Ascending aorta (tissue), 2 donors: ENCODE measurements at regions of chr7 and their contacts with region 1.

Region 1: DNA sequence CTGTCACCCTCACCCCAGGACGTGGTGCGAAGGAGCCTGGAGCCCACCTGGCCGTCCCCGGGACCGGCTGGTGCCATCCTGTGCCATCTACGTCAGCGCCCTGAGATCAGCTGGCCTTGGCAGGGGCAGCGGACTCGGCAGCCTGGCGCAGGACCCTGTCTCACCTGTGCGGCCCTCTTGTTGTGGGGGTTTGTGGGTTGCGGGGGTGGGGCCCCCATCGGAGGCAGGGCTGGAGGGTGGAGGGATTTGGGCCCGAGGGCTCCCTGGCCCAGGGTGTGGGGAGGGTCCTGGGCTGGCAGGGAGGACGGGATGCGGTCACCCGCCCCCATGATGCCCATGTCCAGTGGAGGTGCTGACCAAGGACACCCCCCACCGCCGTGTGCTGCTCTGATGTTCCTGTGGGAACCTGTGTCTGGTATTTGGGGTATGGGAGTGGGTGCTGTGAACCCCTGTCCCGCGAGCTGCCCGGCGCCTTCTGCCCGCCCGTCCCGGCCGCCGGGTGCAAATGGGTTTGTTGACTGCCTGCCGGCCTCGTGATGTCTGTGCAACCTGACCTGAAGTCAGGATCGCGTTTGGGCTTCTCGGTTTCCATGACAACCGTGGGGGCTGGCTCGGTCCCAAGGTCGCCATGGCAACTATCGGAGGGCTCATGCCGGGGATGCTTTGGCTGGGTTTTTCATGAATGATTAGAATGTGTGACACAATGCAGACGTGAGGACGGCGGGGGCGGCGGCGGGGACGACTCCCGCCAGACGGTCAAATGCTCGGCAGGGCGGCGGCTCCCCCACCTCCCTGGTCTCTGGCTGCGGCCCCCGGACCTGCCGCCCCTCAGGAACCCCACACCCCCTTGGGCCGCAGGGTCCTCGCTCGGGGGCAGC is 7.3 kb downstream of the MAFK start:
- DNase-seq: peak; percentile 90 to 99
- H3K4me3 ChIP-seq: peak overlapping the region; percentile 57 to 77
- H3K27ac ChIP-seq: peak overlapping the region; percentile 98 to 99
- H3K4me1 ChIP-seq: peaks cover 17 to 51% of the 10 kb centered on the region in 2 donors
- H3K27me3 ChIP-seq: no peaks in the 10 kb centered on the region
- CTCF ChIP-seq: no peak

Region 2: GRCh38 chr7:1512781-1513656 is 24.8 kb before region 1 on chr7:
- intact Hi-C with region 1: loop called (anchors 2 kb)
- DNase-seq: peak; percentile 89 to 96
- H3K4me3 ChIP-seq: peak overlapping the region; percentile 46 to 56
- H3K27ac ChIP-seq: peak overlapping the region; percentile 99
- H3K4me1 ChIP-seq: peaks cover 6 to 21% of the 10 kb centered on the region in 2 donors
- H3K27me3 ChIP-seq: no peaks in the 10 kb centered on the region
- CTCF ChIP-seq: no peak

Region 3: GRCh38 chr7:2165610-2166594 is 628.1 kb after region 1 on chr7:
- intact Hi-C with region 1: no loop called
- DNase-seq: no peak
- H3K4me3 ChIP-seq: no peak overlapping the region
- H3K27ac ChIP-seq: no peak overlapping the region
- H3K4me1 ChIP-seq: no peaks in the 10 kb centered on the region
- H3K27me3 ChIP-seq: no peaks in the 10 kb centered on the region
- CTCF ChIP-seq: no peak